ENCODE measurements at regions of chr7 and their contacts with region 1.

Region 1: GRCh38 chr7:127651556-127652332 is at the start of gene SND1:
- DNase-seq: peak; percentile 92 to 100 (median 98)
- ATAC-seq: peak; percentile 96
- H3K4me3 ChIP-seq: peak within 1 kb of the TSS; percentile 96
- H3K4me3 Mint-ChIP-seq: peak within 1 kb of the TSS in 6 of 10 donors; percentile 98 to 99 (median 98)
- H3K27ac ChIP-seq: peak within 1 kb of the TSS; percentile 86
- H3K27ac Mint-ChIP-seq: peak within 1 kb of the TSS in 5 of 9 donors; percentile 94 to 99 (median 98)
- H3K4me1 ChIP-seq: peaks cover 22 to 26% of the 10 kb centered on the region in 2 donors
- H3K4me1 Mint-ChIP-seq: peaks cover 5 to 55% (median 43%) of the 10 kb centered on the region in 7 donors
- H3K27me3 ChIP-seq: no peaks in the 10 kb centered on the region
- H3K27me3 Mint-ChIP-seq: peaks cover 0 to 4% (median 0%) of the 10 kb centered on the region in 5 donors
- total RNA-seq, gene SND1: 132 to 253 (median 163) TPM

Region 2: DNA sequence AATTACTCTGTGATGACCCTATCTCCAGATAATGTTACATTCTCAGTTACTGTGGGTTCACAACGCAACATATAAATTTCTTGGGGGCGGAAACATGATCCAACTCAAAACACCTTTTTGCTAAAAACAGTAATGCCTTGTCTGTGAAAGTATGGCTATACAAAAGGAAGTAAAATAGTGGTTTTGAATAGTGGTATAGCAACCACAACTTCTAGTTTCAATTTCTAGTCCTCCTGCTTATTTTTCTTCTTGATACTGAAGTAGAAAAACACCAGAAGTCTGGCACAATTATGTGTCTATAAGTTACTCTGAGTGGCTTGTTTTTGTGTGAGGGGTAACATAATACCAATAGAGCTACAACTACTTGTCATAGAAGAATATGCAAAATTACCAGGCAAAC is 237.8 kb before region 1 on chr7:
- CTCF ChIA-PET with region 1: no interaction called
- POLR2A ChIA-PET with region 1: no interaction called
- intact Hi-C with region 1: loop called in 1 of 2 experiments (anchors 2 kb)
- DNase-seq: peak in 7 of 9 donors; percentile 37 to 76 (median 67)
- ATAC-seq: peak; percentile 88
- H3K4me3 ChIP-seq: peak overlapping the region; percentile 5
- H3K4me3 Mint-ChIP-seq: peak overlapping the region; percentile 57 to 87 (median 74)
- H3K27ac ChIP-seq: peak overlapping the region; percentile 61
- H3K27ac Mint-ChIP-seq: peak overlapping the region; percentile 88 to 99 (median 95)
- H3K4me1 ChIP-seq: peaks cover 20 to 45% of the 10 kb centered on the region in 2 donors
- H3K4me1 Mint-ChIP-seq: peaks cover 45 to 74% (median 68%) of the 10 kb centered on the region in 7 donors
- H3K27me3 ChIP-seq: no peaks in the 10 kb centered on the region
- H3K27me3 Mint-ChIP-seq: peaks cover 0 to 14% (median 0%) of the 10 kb centered on the region in 5 donors

Region 3: DNA sequence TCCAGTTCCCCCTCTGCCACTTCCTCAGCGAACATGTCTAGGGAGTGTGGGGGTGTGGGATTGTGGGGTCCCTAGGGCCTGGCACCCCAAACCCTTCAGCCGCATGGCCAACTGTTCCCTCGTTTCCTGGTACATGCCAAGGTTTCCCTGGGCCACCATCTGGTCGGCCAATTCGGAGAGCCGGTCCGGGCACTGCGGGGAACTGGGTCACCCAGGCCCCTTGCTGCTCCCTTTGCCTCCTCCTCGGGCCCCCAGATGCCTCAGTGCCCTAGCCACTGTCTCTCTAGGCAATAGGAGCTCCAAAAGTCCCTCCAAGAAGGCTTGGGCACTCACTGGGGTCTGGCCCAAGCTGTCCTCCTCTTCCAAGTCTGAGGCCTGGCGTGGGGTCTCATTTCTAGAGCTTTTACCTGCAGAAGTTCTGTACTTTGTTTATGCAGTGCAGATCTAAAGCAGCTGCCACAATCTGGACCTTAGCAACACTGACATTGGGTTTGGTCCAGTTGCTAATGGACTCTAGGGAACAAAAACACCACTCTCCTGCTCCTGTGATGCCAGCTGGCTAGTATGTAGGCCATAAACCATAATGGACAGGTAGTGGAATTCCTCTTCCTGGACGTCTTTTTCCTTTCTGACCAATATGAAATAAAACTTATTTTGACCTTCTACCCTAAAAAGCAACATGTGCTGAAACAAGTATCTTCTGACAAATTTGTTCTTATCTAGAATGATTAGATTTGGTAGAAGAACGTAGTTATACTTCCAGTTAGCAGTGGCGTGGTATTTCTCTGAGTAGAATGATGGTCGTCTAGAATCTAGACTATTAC is 206.6 kb after region 1 on chr7:
- CTCF ChIA-PET with region 1: no interaction called
- POLR2A ChIA-PET with region 1: no interaction called
- intact Hi-C with region 1: loop called (anchors 1 to 2 kb)
- DNase-seq: no peak
- ATAC-seq: no peak
- H3K4me3 ChIP-seq: no peak overlapping the region
- H3K4me3 Mint-ChIP-seq: peak overlapping the region in 4 of 10 donors; percentile 7 to 42 (median 40)
- H3K27ac ChIP-seq: no peak overlapping the region
- H3K27ac Mint-ChIP-seq: peak overlapping the region in 1 of 9 donors; percentile 75
- H3K4me1 ChIP-seq: peaks cover 25 to 37% of the 10 kb centered on the region in 2 donors
- H3K4me1 Mint-ChIP-seq: peaks cover 22 to 59% (median 49%) of the 10 kb centered on the region in 7 donors
- H3K27me3 ChIP-seq: no peaks in the 10 kb centered on the region
- H3K27me3 Mint-ChIP-seq: peaks cover 5 to 40% (median 18%) of the 10 kb centered on the region in 5 donors

Region 4: GRCh38 chr7:128108641-128109423 is 457.1 kb after region 1 on chr7:
- CTCF ChIA-PET with region 1: no interaction called
- POLR2A ChIA-PET with region 1: no interaction called
- intact Hi-C with region 1: loop called in 1 of 2 experiments (anchors 5 kb)
- DNase-seq: peak in 7 of 9 donors; percentile 49 to 83 (median 77)
- ATAC-seq: peak; percentile 90
- H3K4me3 ChIP-seq: peak overlapping the region; percentile 41
- H3K4me3 Mint-ChIP-seq: peak overlapping the region; percentile 65 to 90 (median 79)
- H3K27ac ChIP-seq: peak overlapping the region; percentile 52
- H3K27ac Mint-ChIP-seq: peak overlapping the region; percentile 51 to 94 (median 86)
- H3K4me1 ChIP-seq: peaks cover 33 to 67% of the 10 kb centered on the region in 2 donors
- H3K4me1 Mint-ChIP-seq: peaks cover 54 to 86% (median 82%) of the 10 kb centered on the region in 7 donors
- H3K27me3 ChIP-seq: no peaks in the 10 kb centered on the region
- H3K27me3 Mint-ChIP-seq: peaks cover 0 to 24% (median 0%) of the 10 kb centered on the region in 5 donors

Region 5: DNA sequence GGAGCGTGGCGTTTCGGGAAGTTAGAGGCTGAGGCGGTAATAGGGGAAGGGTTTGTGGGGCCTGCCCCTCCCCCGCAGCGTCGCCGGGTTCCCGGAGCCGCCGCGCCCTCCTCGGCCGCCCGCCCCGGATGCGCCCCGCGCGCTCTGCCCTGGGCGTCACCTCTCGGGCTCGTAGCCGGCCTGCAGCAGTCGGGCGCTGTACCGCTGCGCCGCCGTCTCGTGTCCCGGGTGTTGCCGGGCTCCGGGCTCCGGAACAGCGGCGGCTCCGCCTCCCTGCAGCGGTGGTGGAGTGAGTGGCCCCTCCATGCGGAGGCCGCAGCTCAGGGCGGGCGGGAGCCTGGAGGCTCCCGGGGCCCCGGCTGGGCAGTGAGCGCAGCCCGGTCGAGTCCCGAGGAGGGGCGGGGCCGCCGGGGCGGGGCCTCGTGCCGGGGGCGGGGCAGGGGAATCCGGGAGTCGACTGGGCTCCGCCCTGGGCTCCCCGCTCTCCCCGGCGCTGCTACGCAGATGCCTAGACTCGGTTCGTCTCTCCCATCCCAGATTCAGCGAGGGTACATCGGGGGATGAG is 757.9 kb after region 1 on chr7 and contains the start of gene IMPDH1:
- CTCF ChIA-PET with region 1: no interaction called
- POLR2A ChIA-PET with region 1: no interaction called
- intact Hi-C with region 1: loop called in 1 of 2 experiments (anchors 2 kb)
- DNase-seq: peak; percentile 73 to 95 (median 83)
- ATAC-seq: peak; percentile 87
- H3K4me3 ChIP-seq: peak within 1 kb of the TSS; percentile 89
- H3K4me3 Mint-ChIP-seq: peak within 1 kb of the TSS; percentile 88 to 95 (median 92)
- H3K27ac ChIP-seq: peak within 1 kb of the TSS; percentile 81
- H3K27ac Mint-ChIP-seq: peak within 1 kb of the TSS; percentile 87 to 93 (median 90)
- H3K4me1 ChIP-seq: peaks cover 15 to 27% of the 10 kb centered on the region in 2 donors
- H3K4me1 Mint-ChIP-seq: peaks cover 12 to 41% (median 38%) of the 10 kb centered on the region in 7 donors
- H3K27me3 ChIP-seq: no peaks in the 10 kb centered on the region
- H3K27me3 Mint-ChIP-seq: peaks cover 0 to 26% (median 0%) of the 10 kb centered on the region in 5 donors
- total RNA-seq, gene IMPDH1: 36.5 to 92.0 (median 44.4) TPM

Region 6: DNA sequence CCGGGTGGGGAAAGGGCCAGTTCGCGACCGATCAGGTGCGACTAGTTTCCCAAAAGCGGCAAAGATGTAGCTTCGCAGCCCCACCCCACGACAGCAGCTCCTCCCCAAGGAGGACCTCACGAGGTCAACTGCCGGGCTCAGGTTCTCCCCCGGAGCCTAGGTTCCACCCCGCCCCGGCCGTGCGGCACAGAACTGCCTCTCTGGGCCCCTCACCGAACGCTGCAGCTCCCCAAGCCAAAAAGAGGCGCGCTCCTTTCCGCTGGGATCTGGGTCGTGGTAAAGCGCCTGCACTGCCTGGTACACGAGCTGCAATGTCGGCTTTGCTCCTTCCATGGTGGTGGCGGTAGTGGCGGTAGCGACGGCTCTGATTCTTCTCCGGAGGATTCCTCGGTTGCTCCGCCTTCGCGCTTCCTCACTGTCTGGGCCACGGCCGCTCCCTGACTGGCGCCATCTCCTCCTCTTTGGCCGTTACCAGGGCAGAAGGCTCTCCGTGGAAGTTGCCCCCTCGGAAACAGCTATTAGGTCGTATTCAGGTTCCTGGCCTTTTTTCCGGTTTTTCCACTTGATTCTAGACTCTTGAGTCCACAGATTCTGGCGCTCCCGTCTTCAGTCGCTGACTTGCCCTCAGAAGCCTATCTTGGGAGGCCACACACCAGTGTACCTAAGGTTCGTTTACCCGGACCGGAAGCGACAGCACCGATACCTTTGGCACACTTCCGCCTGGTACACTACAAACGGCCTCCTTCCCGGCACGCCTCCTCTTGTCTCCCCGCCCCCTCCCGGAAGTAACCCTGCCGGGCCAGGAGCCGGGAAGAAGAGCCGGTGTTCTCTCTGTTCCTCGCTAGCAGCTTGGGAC is 1402.9 kb after region 1 on chr7 and contains the start of gene TNPO3:
- CTCF ChIA-PET with region 1: no interaction called
- POLR2A ChIA-PET with region 1: no interaction called
- intact Hi-C with region 1: loop called in 1 of 2 experiments (anchors 5 kb)
- DNase-seq: peak; percentile 76 to 90 (median 85)
- ATAC-seq: peak; percentile 92
- H3K4me3 ChIP-seq: peak within 1 kb of the TSS; percentile 96
- H3K4me3 Mint-ChIP-seq: peak within 1 kb of the TSS; percentile 91 to 99 (median 99)
- H3K27ac ChIP-seq: peak within 1 kb of the TSS; percentile 92
- H3K27ac Mint-ChIP-seq: peak within 1 kb of the TSS; percentile 96 to 100 (median 99)
- H3K4me1 ChIP-seq: peaks cover 15 to 18% of the 10 kb centered on the region in 2 donors
- H3K4me1 Mint-ChIP-seq: peaks cover 17 to 51% (median 39%) of the 10 kb centered on the region in 7 donors
- H3K27me3 ChIP-seq: peaks cover 0 to 3% of the 10 kb centered on the region in 2 donors
- H3K27me3 Mint-ChIP-seq: peaks cover 4 to 13% (median 4%) of the 10 kb centered on the region in 5 donors
- total RNA-seq, gene TNPO3: 28.6 to 40.6 (median 39.6) TPM

Measured in naive thymus-derived CD4-positive, alpha-beta T cell (primary cell).